Naive thymus-derived CD4-positive, alpha-beta T cell (primary cell): ENCODE measurements at regions of chr11 and their contacts with region 1.

Region 1: DNA sequence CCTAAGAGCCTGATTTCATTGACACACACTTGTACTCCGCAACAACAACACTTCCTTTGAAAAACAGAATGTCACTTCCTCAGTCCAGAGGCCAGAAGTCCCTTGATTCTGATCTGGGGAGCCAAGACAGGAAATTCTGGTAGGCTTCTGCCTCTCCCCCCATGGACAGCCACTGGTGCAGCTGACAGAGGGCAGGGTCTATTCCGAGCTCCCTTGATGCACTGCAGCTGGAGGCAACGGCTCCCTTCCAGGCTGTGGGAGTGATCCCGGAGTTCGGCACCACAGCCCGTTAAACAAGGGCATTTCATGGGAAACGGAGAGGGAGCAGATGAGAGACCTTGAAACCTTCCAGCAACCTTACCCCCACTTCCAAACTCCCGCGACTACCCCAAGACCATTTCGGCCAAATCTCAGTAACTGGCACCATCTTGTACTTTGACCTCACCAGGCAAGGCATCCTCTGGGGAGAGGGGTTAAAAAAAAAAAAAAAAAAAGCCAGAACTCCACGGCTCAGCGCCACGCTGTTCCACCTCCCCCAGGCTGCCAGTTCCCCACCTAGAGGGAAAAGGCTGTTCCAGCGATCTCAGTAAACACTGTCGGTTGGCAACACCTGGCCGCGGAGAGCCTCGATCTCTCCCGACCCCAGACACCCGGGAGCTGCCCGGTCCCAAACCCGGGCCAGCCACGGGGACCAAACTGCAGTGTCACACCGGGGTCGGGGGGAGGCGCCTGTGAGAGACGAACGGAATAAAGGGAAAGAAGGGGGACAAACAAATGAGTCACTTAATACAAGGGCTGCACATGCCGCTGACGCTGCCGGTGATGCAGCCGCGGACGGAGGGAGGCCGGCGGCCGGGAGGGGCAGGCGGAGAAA is 1.1 kb downstream of the GAB2 start:
- DNase-seq: peak; percentile 37 to 83 (median 62)
- ATAC-seq: peak; percentile 69
- H3K4me3 ChIP-seq: peak overlapping the region; percentile 62
- H3K4me3 Mint-ChIP-seq: peak overlapping the region; percentile 83 to 97 (median 92)
- H3K27ac ChIP-seq: peak overlapping the region; percentile 17
- H3K27ac Mint-ChIP-seq: peak overlapping the region; percentile 12 to 97 (median 73)
- H3K4me1 ChIP-seq: peaks cover 8 to 17% of the 10 kb centered on the region in 2 donors
- H3K4me1 Mint-ChIP-seq: peaks cover 21 to 68% (median 26%) of the 10 kb centered on the region in 7 donors
- H3K27me3 ChIP-seq: no peaks in the 10 kb centered on the region
- H3K27me3 Mint-ChIP-seq: peaks cover 15 to 26% (median 19%) of the 10 kb centered on the region in 5 donors

Region 2: GRCh38 chr11:78139422-78140391 is 276.8 kb before region 1 on chr11 and contains the start of gene ALG8:
- CTCF ChIA-PET with region 1: no interaction called
- POLR2A ChIA-PET with region 1: interaction called, 5 read pairs
- intact Hi-C with region 1: loop called (anchors 1 kb)
- DNase-seq: peak; percentile 94 to 97 (median 96)
- ATAC-seq: peak; percentile 95
- H3K4me3 ChIP-seq: peak within 1 kb of the TSS; percentile 88
- H3K4me3 Mint-ChIP-seq: peak within 1 kb of the TSS; percentile 85 to 98 (median 95)
- H3K27ac ChIP-seq: peak within 1 kb of the TSS; percentile 82
- H3K27ac Mint-ChIP-seq: peak within 1 kb of the TSS; percentile 87 to 98 (median 93)
- H3K4me1 ChIP-seq: peaks cover 8 to 13% of the 10 kb centered on the region in 2 donors
- H3K4me1 Mint-ChIP-seq: peaks cover 23 to 51% (median 42%) of the 10 kb centered on the region in 7 donors
- H3K27me3 ChIP-seq: no peaks in the 10 kb centered on the region
- H3K27me3 Mint-ChIP-seq: no peaks in the 10 kb centered on the region
- total RNA-seq, gene ALG8: 27.2 to 53.8 (median 30.8) TPM

Region 3: GRCh38 chr11:78228467-78228866 is 188.1 kb before region 1 on chr11:
- CTCF ChIA-PET with region 1: no interaction called
- POLR2A ChIA-PET with region 1: no interaction called
- intact Hi-C with region 1: loop called in 1 of 2 experiments (anchors 2 kb)
- DNase-seq: peak in 2 of 9 donors; percentile 18 to 21
- ATAC-seq: peak; percentile 76
- H3K4me3 ChIP-seq: no peak overlapping the region
- H3K4me3 Mint-ChIP-seq: no peak overlapping the region
- H3K27ac ChIP-seq: no peak overlapping the region
- H3K27ac Mint-ChIP-seq: peak overlapping the region in 2 of 9 donors; percentile 57 to 65
- H3K4me1 ChIP-seq: no peaks in the 10 kb centered on the region
- H3K4me1 Mint-ChIP-seq: peaks cover 6 to 61% (median 9%) of the 10 kb centered on the region in 7 donors
- H3K27me3 ChIP-seq: no peaks in the 10 kb centered on the region
- H3K27me3 Mint-ChIP-seq: no peaks in the 10 kb centered on the region

Region 4: GRCh38 chr11:78339483-78339882 is 77.1 kb before region 1 on chr11:
- CTCF ChIA-PET with region 1: no interaction called
- POLR2A ChIA-PET with region 1: no interaction called
- intact Hi-C with region 1: loop called in 1 of 2 experiments (anchors 5 kb)
- DNase-seq: no peak
- ATAC-seq: no peak
- H3K4me3 ChIP-seq: no peak overlapping the region
- H3K4me3 Mint-ChIP-seq: peak overlapping the region in 1 of 10 donors; percentile 71
- H3K27ac ChIP-seq: no peak overlapping the region
- H3K27ac Mint-ChIP-seq: peak overlapping the region in 1 of 9 donors; percentile 95
- H3K4me1 ChIP-seq: no peaks in the 10 kb centered on the region
- H3K4me1 Mint-ChIP-seq: peaks cover 0 to 82% (median 7%) of the 10 kb centered on the region in 7 donors
- H3K27me3 ChIP-seq: no peaks in the 10 kb centered on the region
- H3K27me3 Mint-ChIP-seq: peaks cover 0 to 14% (median 7%) of the 10 kb centered on the region in 5 donors

Region 5: DNA sequence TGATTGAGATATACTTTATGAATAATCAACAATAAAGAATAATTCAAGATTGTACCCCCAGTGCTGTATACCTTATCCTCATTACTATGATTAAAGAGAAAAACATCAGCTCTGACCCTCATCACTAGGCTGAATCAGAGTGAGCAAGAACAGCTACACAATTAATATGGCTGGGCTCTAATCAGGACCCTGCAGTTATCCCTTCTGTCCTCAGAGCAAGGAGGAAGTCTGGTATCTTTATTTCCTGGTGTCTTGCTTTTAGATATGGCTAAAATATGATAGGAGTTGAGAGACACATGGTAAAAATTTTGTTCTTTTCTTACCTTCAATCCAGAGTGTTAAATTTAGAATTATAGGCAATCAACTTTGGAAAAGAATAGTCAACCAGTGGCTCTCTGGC is 29.7 kb after region 1 on chr11:
- CTCF ChIA-PET with region 1: no interaction called
- POLR2A ChIA-PET with region 1: no interaction called
- intact Hi-C with region 1: no loop called
- DNase-seq: no peak
- ATAC-seq: no peak
- H3K4me3 ChIP-seq: no peak overlapping the region
- H3K4me3 Mint-ChIP-seq: no peak overlapping the region
- H3K27ac ChIP-seq: no peak overlapping the region
- H3K27ac Mint-ChIP-seq: no peak overlapping the region
- H3K4me1 ChIP-seq: no peaks in the 10 kb centered on the region
- H3K4me1 Mint-ChIP-seq: peaks cover 0 to 6% (median under 1%) of the 10 kb centered on the region in 7 donors
- H3K27me3 ChIP-seq: no peaks in the 10 kb centered on the region
- H3K27me3 Mint-ChIP-seq: no peaks in the 10 kb centered on the region

Region 6: GRCh38 chr11:78564490-78565467 is 148.2 kb after region 1 on chr11:
- CTCF ChIA-PET with region 1: interaction called, 13 read pairs
- POLR2A ChIA-PET with region 1: no interaction called
- intact Hi-C with region 1: loop called (anchors 1 kb)
- DNase-seq: peak in 7 of 9 donors; percentile 37 to 66 (median 60)
- ATAC-seq: peak; percentile 83
- H3K4me3 ChIP-seq: no peak overlapping the region
- H3K4me3 Mint-ChIP-seq: peak overlapping the region in 2 of 10 donors; percentile 23 to 31
- H3K27ac ChIP-seq: no peak overlapping the region
- H3K27ac Mint-ChIP-seq: peak overlapping the region in 5 of 9 donors; percentile 30 to 84 (median 58)
- H3K4me1 ChIP-seq: peaks cover 0 to 13% of the 10 kb centered on the region in 2 donors
- H3K4me1 Mint-ChIP-seq: peaks cover 22 to 50% (median 36%) of the 10 kb centered on the region in 7 donors
- H3K27me3 ChIP-seq: no peaks in the 10 kb centered on the region
- H3K27me3 Mint-ChIP-seq: no peaks in the 10 kb centered on the region